BJ (cell line): ENCODE measurements at regions of chr18 and their contacts with region 1.

Region 1: GRCh38 chr18:63741769-63742168 is 33.4 kb upstream of the SERPINB7 start:
- DNase-seq: no peak
- H3K4me3 ChIP-seq: no peak overlapping the region
- H3K27me3 ChIP-seq: no peaks in the 10 kb centered on the region
- CTCF ChIP-seq: peak; percentile 63

Region 2: DNA sequence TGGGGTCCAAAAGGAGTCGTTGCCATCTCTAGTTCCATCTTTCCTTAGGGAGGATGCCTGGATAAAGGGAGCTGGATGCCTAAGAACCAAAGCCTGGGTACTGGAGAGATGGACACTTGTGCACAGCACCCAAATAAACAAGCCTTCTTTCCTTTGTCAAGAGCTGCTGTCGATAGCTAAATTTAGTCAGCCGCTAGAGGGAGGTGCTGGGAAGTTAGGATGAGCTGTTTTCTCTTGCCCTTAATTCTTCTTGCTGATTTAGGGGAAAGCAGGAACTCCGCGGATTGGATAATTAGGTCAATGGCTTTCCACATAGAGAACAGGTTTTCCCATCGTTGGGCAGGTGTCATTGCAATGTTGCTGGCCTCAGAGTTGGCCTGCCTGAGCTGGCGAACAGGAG is 230.5 kb before region 1 on chr18:
- CTCF ChIA-PET with region 1: interaction called, 117 read pairs
- POLR2A ChIA-PET with region 1: no interaction called
- DNase-seq: no peak
- H3K4me3 ChIP-seq: no peak overlapping the region
- H3K27me3 ChIP-seq: no peaks in the 10 kb centered on the region
- CTCF ChIP-seq: peak; percentile 79

Region 3: DNA sequence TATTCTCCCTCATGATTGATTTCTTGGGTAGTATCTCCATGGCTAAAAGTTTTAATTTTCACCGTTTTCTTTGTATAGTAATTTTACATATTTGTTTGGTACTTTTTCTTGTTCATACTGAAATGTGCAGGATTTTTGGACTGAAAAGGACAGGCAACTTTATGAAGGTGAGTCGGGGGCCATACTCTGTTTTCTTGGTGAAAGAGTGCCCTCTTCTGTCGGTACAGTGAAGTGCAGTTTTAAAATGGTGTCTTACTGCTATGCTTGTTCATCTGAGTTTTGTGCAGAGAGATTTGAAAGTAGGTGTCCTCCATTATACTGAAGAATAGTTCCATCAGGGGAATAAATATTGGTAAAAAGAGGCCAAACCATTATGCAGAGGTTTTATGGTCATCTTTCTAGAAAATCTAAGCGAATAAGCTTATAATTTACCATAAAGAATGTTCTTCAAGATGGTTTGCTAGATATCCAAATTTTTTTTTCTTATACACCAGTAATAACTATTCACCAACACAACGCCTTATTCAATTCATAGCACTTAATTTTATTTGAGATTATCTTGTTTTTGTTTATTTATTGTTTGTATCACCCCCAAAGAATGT is 163.3 kb before region 1 on chr18:
- CTCF ChIA-PET with region 1: interaction called, 87 read pairs
- POLR2A ChIA-PET with region 1: no interaction called
- DNase-seq: peak; percentile 11
- H3K4me3 ChIP-seq: no peak overlapping the region
- H3K27me3 ChIP-seq: no peaks in the 10 kb centered on the region
- CTCF ChIP-seq: peak; percentile 81

Region 4: GRCh38 chr18:63837556-63837955 is 95.8 kb after region 1 on chr18:
- CTCF ChIA-PET with region 1: interaction called, 72 read pairs
- POLR2A ChIA-PET with region 1: no interaction called
- DNase-seq: no peak
- H3K4me3 ChIP-seq: no peak overlapping the region
- H3K27me3 ChIP-seq: no peaks in the 10 kb centered on the region
- CTCF ChIP-seq: no peak

Region 5: GRCh38 chr18:63936156-63936931 is 194.6 kb after region 1 on chr18:
- CTCF ChIA-PET with region 1: interaction called, 16 read pairs
- POLR2A ChIA-PET with region 1: interaction called, 3 read pairs
- DNase-seq: peak; percentile 9
- H3K4me3 ChIP-seq: peak overlapping the region; percentile 85
- H3K27me3 ChIP-seq: peaks cover 2% of the 10 kb centered on the region; the same call in 1 of the 2 replicates
- CTCF ChIP-seq: peak; percentile 74

Region 6: GRCh38 chr18:63956755-63957154 is 215.0 kb after region 1 on chr18:
- CTCF ChIA-PET with region 1: no interaction called
- POLR2A ChIA-PET with region 1: no interaction called
- DNase-seq: peak; percentile 9
- H3K4me3 ChIP-seq: no peak overlapping the region
- H3K27me3 ChIP-seq: 0 out of 2 replicates have a peak, but pooled peaks cover 3% of the 10 kb centered on the region
- CTCF ChIP-seq: no peak

Region 7: DNA sequence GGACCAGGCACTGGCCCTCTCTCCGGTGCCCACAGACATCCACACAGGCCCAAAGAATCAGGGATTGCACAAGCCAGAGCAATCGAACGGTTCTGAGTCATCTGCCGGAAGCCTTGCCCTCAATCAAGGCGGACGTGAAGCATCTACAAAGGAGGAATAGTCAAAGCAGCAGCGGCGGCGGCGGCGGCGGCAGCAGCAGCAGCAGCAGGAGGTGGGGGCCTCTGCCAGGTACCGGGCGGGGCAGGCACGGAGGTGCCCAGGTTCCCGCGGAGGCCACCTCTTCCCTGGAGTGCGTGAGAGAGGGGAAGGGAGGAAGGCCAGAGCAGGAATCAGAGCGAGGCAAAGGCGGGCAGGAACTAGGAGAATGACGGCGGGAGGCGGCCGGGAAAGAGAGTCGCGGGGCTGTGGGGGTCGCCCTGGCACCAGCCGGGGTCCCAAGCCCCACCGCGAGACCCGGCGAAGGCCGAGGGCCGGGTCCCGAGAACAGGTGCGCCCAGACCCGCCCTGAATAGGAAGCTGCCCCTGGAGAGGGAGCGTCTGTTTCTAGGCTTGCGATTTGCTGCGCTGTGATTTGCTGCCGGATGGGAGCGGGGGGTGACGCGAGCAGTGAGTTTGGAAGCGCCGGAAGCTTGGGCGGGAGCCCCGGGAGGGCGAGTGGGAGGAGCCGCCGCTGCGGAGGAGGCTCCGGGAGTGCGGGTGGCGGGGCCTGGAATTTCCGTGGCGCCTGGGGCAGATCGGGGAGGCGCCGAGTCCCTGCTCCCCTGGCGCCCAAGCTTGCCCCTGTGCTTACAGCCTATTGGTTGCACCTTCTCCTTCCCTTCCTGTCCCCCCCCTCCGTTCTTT is 228.4 kb after region 1 on chr18 and contains the start of gene SERPINB8:
- CTCF ChIA-PET with region 1: no interaction called
- POLR2A ChIA-PET with region 1: no interaction called
- DNase-seq: peak; percentile 80
- H3K4me3 ChIP-seq: peak within 1 kb of the TSS; percentile 80
- H3K27me3 ChIP-seq: no peaks in the 10 kb centered on the region
- CTCF ChIP-seq: no peak
- polyA plus RNA-seq, gene SERPINB8: 18.4 and 27.0 TPM in 2 replicates